CD14-positive monocyte (primary cell): ENCODE measurements at regions of chr3 and their contacts with region 1.

Region 1: DNA sequence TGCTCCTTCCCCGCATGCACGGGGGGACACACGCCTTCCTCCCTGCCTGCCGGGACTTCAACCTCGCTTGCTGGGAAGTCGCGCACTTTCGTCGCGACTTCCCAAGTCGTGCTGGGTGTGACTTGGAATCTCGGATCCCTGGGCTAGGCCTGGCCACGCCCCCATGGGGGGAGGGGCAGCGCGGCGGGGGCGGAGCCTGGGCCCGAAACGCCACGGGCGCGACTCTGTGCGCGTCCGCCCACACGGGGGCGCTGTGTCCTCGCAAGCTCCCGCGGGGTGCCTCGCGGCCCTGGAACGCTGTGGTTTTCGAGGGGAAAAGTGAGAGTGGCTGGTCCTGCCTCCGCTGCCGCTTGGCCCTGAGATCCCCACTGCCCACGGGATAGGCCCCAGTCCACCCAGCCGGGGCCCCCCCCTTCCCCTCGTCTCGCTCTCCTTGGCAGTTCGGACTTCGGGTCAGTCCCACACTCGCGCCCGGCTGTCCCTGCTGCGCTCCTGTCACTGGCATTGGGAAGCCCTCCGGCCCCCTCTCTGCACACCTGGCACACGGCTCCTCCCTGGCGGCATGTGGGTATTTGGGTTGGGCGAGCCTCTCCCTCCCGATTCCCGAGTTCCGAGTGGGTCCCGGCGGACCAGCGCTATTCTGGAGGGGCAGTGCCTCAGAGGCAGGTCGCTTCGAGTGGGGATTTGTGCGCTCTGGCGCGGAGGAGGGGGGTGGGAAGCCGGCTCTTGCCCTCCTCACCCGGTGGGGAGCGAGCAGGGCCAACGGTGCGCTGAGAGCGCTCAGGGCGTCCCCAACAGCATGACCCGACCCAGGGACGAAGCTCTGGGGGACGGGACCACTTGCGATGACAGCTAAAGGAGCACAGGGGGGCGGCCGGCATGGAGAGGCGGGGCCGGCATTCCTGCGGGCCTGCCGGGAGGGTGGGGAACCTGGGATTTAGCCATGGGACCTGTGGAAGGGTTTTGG is 23.6 kb downstream of the SEC61A1 start:
- DNase-seq: peak; percentile 75 to 85 (median 83)
- H3K4me3 ChIP-seq: peak overlapping the region; percentile 39 to 78 (median 67)
- H3K4me3 Mint-ChIP-seq: peak overlapping the region; percentile 82 to 87
- H3K27ac ChIP-seq: peak overlapping the region; percentile 56 to 77
- H3K27ac Mint-ChIP-seq: peak overlapping the region; percentile 70 to 90 (median 87)
- H3K4me1 ChIP-seq: peaks cover 30 to 51% of the 10 kb centered on the region in 2 donors
- H3K4me1 Mint-ChIP-seq: peaks cover 37% of the 10 kb centered on the region
- H3K27me3 ChIP-seq: no peaks in the 10 kb centered on the region
- H3K27me3 Mint-ChIP-seq: peaks cover 0 to 2% (median 0%) of the 10 kb centered on the region in 3 donors
- CTCF ChIP-seq: peak; percentile 97

Region 2: DNA sequence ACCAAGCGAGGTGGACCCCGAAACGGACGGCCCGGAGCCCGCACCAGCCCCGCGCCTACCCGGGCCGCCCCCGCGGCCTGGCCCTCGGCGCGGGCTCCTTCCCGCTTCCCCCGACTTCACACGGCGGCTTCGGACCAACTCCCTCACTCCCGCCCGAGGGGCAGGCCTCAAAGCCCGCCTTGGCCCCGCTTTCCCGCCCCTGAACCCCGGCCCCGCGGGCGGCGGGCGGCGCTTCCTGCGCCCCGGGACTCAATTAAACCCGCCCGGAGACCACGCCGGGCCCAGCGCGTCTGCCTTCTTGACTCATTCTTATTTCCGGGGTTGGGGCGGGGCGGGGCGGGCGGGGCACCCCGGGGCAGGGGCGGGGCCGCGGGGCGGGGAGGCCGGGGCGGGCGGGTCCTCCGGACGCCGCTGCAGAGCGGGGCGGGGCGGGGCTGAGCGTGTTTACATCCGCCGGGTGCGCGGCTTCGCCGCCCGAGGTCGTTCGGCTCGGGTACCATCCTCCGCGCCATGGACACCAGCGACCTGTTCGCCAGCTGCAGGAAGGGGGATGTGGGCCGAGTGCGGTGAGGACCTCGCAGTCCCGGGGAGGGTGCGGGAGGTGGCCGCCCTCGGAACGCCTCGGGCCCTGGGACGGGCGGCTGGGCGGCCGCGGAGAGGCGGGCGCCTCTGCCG is 403.1 kb before region 1 on chr3 and contains the start of gene ABTB1:
- intact Hi-C with region 1: loop called in 1 of 2 experiments (anchors 10 kb)
- DNase-seq: peak; percentile 74 to 80 (median 76)
- H3K4me3 ChIP-seq: peak within 1 kb of the TSS; percentile 65 to 91 (median 69)
- H3K4me3 Mint-ChIP-seq: peak within 1 kb of the TSS; percentile 86 to 93
- H3K27ac ChIP-seq: peak within 1 kb of the TSS; percentile 38 to 96
- H3K27ac Mint-ChIP-seq: peak within 1 kb of the TSS; percentile 79 to 94 (median 89)
- H3K4me1 ChIP-seq: peaks cover 33 to 47% of the 10 kb centered on the region in 2 donors
- H3K4me1 Mint-ChIP-seq: peaks cover 47% of the 10 kb centered on the region
- H3K27me3 ChIP-seq: no peaks in the 10 kb centered on the region
- H3K27me3 Mint-ChIP-seq: peaks cover 1 to 3% (median 1%) of the 10 kb centered on the region in 3 donors
- CTCF ChIP-seq: no peak
- polyA plus RNA-seq, gene ABTB1: 107 to 246 (median 118) TPM

Region 3: GRCh38 chr3:127735767-127736704 is 339.8 kb before region 1 on chr3:
- intact Hi-C with region 1: no loop called
- DNase-seq: peak; percentile 77 to 89 (median 85)
- H3K4me3 ChIP-seq: peak overlapping the region in 1 of 3 experiments; percentile 28
- H3K4me3 Mint-ChIP-seq: peak overlapping the region; percentile 12 to 85
- H3K27ac ChIP-seq: peak overlapping the region; percentile 69 to 77
- H3K27ac Mint-ChIP-seq: peak overlapping the region; percentile 88 to 96 (median 92)
- H3K4me1 ChIP-seq: peaks cover 63 to 66% of the 10 kb centered on the region in 2 donors
- H3K4me1 Mint-ChIP-seq: peaks cover 66% of the 10 kb centered on the region
- H3K27me3 ChIP-seq: no peaks in the 10 kb centered on the region
- H3K27me3 Mint-ChIP-seq: peaks cover under 1 to 3% (median 2%) of the 10 kb centered on the region in 3 donors
- CTCF ChIP-seq: no peak

Region 4: GRCh38 chr3:128133273-128134084 is 57.7 kb after region 1 on chr3:
- intact Hi-C with region 1: loop called in 1 of 2 experiments (anchors 5 kb)
- DNase-seq: peak in 2 of 3 donors; percentile 43 to 50
- H3K4me3 ChIP-seq: no peak overlapping the region
- H3K4me3 Mint-ChIP-seq: no peak overlapping the region
- H3K27ac ChIP-seq: no peak overlapping the region
- H3K27ac Mint-ChIP-seq: no peak overlapping the region
- H3K4me1 ChIP-seq: no peaks in the 10 kb centered on the region
- H3K4me1 Mint-ChIP-seq: peaks cover 5% of the 10 kb centered on the region
- H3K27me3 ChIP-seq: peaks cover 1 to 3% of the 10 kb centered on the region in 2 donors
- H3K27me3 Mint-ChIP-seq: peaks cover 3 to 11% (median 6%) of the 10 kb centered on the region in 3 donors
- CTCF ChIP-seq: peak; percentile 74

Region 5: GRCh38 chr3:128584412-128585020 is 508.7 kb after region 1 on chr3:
- intact Hi-C with region 1: loop called in 1 of 2 experiments (anchors 10 kb)
- DNase-seq: peak in 2 of 3 donors; percentile 42 to 68
- H3K4me3 ChIP-seq: no peak overlapping the region
- H3K4me3 Mint-ChIP-seq: peak overlapping the region in 1 of 2 donors; percentile 35
- H3K27ac ChIP-seq: no peak overlapping the region
- H3K27ac Mint-ChIP-seq: no peak overlapping the region
- H3K4me1 ChIP-seq: peaks cover 11 to 13% of the 10 kb centered on the region in 2 donors
- H3K4me1 Mint-ChIP-seq: peaks cover 12% of the 10 kb centered on the region
- H3K27me3 ChIP-seq: peaks cover 0 to 4% of the 10 kb centered on the region in 2 donors
- H3K27me3 Mint-ChIP-seq: peaks cover 0 to 6% (median 4%) of the 10 kb centered on the region in 3 donors
- CTCF ChIP-seq: peak; percentile 66

Region 6: GRCh38 chr3:128805772-128806171 is 730.0 kb after region 1 on chr3:
- intact Hi-C with region 1: loop called in 1 of 2 experiments (anchors 5 kb)
- DNase-seq: peak; percentile 89 to 98 (median 95)
- H3K4me3 ChIP-seq: peak overlapping the region in 1 of 3 experiments; percentile 12
- H3K4me3 Mint-ChIP-seq: no peak overlapping the region
- H3K27ac ChIP-seq: peak overlapping the region; percentile 93 to 94
- H3K27ac Mint-ChIP-seq: peak overlapping the region; percentile 94 to 98 (median 96)
- H3K4me1 ChIP-seq: peaks cover 68 to 83% of the 10 kb centered on the region in 2 donors
- H3K4me1 Mint-ChIP-seq: peaks cover 80% of the 10 kb centered on the region
- H3K27me3 ChIP-seq: no peaks in the 10 kb centered on the region
- H3K27me3 Mint-ChIP-seq: no peaks in the 10 kb centered on the region
- CTCF ChIP-seq: no peak